ENCODE measurements at regions of chr19 and their contacts with region 1.

Region 1: DNA sequence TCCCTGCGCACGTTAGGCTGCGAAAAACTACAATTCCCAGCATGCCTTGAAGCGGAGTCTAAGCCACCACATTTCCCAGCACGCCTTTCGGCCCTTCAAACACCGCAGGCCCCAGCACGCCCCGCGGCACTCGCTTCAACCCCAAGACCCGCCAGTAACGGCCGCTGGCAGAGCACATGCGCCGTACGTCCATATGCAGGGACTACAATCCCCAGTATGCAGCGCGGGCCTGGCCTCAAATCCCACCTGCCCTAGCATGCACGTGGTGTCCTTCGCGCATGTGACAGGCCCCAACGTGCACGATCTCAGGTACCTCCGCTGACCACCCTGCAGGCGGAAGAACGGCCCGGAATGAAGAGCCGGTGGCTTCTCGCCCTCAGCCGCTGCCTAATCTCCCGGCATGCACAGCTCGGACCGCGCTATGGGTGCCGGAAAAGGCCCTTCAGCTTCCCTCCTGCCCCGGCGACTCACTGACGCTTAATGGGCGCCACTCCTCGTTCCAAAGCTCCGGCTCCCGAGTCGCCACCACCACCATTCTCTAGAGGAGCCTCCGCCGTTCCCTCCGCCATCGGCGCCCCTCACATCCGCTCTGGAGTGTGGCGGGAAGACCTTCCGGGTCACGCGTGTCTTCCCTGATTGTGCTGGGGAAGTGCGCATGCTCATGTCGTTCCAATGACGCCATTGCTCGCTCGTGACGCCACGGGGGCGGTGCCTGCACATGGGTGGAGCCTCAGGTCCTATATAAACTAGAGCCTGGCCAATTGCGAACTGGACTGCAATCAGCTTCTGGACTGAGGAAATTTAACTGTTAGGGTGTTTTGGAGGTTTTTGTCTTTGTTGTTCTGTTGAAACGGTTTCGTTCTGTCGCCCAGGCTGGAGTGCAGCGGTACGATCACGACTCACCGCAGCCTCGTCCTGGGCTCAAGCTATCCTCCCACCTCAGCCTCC is at the start of gene DUS3L:
- DNase-seq: peak; percentile 98
- ATAC-seq: peak; percentile 99
- H3K4me3 ChIP-seq: peak within 1 kb of the TSS; percentile 71
- H3K27ac ChIP-seq: peak within 1 kb of the TSS; percentile 92
- H3K4me1 ChIP-seq: peaks cover 3% of the 10 kb centered on the region; the same call in 1 of the 2 replicates
- H3K27me3 ChIP-seq: no peaks in the 10 kb centered on the region
- CTCF ChIP-seq: no peak
- EP300 ChIP-seq: no peak
- POLR2A ChIP-seq: peak; percentile 93
- RAD21 ChIP-seq: no peak
- polyA plus RNA-seq, gene DUS3L: 0.64 to 1.5 TPM

Region 2: DNA sequence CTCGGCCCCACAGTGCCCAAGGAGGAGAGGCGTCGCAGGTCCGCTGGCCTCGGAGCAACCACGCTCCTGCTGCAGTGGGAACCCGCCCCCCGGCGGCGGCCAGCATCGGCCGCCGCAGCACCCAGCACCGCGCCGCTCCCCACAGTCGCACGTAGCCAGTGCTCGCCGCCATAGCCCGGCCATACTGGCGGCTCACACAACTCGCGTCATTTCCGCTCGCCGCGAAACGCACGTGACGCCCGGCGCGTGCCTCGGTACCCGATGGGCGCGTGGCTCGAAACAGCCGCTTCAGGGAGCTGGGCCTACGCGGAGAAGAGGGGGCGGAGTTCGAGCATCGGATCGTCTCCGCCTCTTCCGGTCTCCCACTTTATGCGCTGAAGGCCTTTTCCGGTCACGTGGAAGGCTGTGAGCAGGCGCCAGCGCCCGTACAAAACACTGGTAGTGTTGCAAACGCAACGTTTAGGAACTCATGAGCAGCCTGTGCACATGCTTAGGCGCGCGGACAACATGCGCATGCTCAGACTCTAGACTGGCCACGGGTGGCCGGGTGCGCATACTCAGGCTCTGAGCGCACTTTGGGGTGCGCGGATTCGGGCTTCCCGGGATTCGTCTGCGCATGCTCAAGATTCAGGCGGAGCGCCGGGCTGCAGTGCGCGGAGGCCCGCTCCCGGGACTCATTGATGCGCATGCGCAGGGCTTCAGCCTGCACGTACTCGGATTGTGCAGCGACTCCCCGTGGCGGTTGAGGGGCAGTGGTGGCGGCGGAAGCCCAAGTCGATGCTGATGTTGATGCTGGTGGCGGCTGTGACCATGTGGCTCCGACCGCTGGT is 70.7 kb before region 1 on chr19 and contains the starts of genes CATSPERD and LONP1:
- CTCF ChIA-PET with region 1: interaction called, 3 read pairs
- POLR2A ChIA-PET with region 1: no interaction called
- RAD21 ChIA-PET with region 1: no interaction called
- SMC1A ChIA-PET with region 1: no interaction called
- in situ Hi-C with region 1: no loop called
- intact Hi-C with region 1: loop called (anchors 1 kb)
- DNase-seq: peak; percentile 95
- ATAC-seq: peak; percentile 94
- H3K4me3 ChIP-seq: peak within 1 kb of the TSS; percentile 98
- H3K27ac ChIP-seq: peak within 1 kb of the TSS; percentile 91
- H3K4me1 ChIP-seq: peaks cover 4% of the 10 kb centered on the region
- H3K27me3 ChIP-seq: no peaks in the 10 kb centered on the region
- CTCF ChIP-seq: peak; percentile 96 to 99 (median 97)
- EP300 ChIP-seq: no peak; a peak in 1 of 4 replicates
- POLR2A ChIP-seq: peak; percentile 90
- RAD21 ChIP-seq: peak; percentile 22; the same call in 1 of the 2 replicates
- polyA plus RNA-seq, gene CATSPERD: 0.02 TPM in 1 of 2 experiments, not detected in the other
- polyA plus RNA-seq, gene LONP1: 0.61 to 3.2 TPM

Region 3: DNA sequence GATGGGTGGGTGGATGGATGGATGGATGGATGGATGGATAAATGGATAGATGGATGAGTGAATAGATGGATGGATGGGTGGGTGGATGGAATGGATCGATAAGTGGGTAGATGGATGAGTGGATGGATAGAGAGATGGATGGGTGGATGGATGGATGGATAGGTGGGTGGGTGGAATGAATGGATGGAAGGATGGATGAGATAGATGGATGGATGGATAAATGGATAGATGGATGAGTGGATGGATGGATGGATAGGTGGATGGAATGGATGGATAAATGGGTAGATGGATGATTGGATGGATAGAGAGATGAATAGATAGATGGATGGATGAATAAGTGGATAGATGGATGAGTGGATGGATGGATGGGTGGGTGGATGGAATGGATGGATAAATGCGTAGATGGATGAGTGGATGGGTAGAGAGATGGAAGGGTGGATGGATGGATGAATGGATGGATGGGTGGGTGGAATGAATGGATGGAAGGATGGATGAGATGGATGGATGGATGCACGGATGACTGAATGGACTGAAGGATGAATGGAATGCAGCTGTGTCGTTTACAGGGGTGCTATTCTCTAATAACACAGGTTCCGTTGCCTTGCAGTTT is 28.1 kb before region 1 on chr19:
- CTCF ChIA-PET with region 1: no interaction called
- POLR2A ChIA-PET with region 1: no interaction called
- RAD21 ChIA-PET with region 1: no interaction called
- SMC1A ChIA-PET with region 1: no interaction called
- in situ Hi-C with region 1: no loop called
- intact Hi-C with region 1: no loop called
- DNase-seq: no peak
- ATAC-seq: no peak
- H3K4me3 ChIP-seq: no peak overlapping the region
- H3K27ac ChIP-seq: no peak overlapping the region
- H3K4me1 ChIP-seq: no peaks in the 10 kb centered on the region
- H3K27me3 ChIP-seq: no peaks in the 10 kb centered on the region
- CTCF ChIP-seq: no peak
- EP300 ChIP-seq: no peak
- POLR2A ChIP-seq: no peak
- RAD21 ChIP-seq: no peak

Region 4: GRCh38 chr19:5904352-5905113 is 113.7 kb after region 1 on chr19 and contains the start of gene VMAC:
- CTCF ChIA-PET with region 1: no interaction called
- POLR2A ChIA-PET with region 1: interaction called, 3 read pairs
- RAD21 ChIA-PET with region 1: no interaction called
- SMC1A ChIA-PET with region 1: no interaction called
- in situ Hi-C with region 1: no loop called
- intact Hi-C with region 1: loop called (anchors 2 kb)
- DNase-seq: peak; percentile 100
- ATAC-seq: peak; percentile 90
- H3K4me3 ChIP-seq: peak within 1 kb of the TSS; percentile 95
- H3K27ac ChIP-seq: peak within 1 kb of the TSS; percentile 88
- H3K4me1 ChIP-seq: peaks cover 9% of the 10 kb centered on the region
- H3K27me3 ChIP-seq: no peaks in the 10 kb centered on the region
- CTCF ChIP-seq: no peak
- EP300 ChIP-seq: no peak
- POLR2A ChIP-seq: peak; percentile 92
- RAD21 ChIP-seq: no peak
- polyA plus RNA-seq, gene VMAC: 0.18 to 0.27 TPM

Measured in GM12878 (cell line).